ENCODE measurements at regions of chr12 and their contacts with region 1.

Region 1: DNA sequence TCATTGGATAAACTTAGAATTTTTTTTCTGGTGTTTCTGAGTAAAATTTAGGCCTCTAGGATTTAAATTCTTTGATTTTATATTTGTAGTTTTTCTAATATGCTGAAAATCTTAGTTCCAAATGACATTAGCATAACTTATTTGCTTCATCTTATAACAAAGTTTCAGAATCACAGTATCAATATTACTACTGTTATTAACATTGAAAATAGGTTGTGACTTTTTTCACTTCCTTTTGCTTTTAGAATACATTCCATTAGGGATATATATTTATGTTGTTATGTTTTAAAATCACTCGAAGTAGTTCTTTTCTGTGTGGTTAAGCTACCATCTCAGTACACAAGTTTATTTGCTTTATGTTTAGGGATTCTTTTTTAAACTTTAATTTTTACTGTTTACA is 12.8 kb downstream of the RAB3IP start:
- DNase-seq: no peak
- H3K4me3 Mint-ChIP-seq: no peak overlapping the region
- H3K27ac Mint-ChIP-seq: no peak overlapping the region
- H3K4me1 Mint-ChIP-seq: peaks cover 3% of the 10 kb centered on the region
- H3K27me3 Mint-ChIP-seq: no peaks in the 10 kb centered on the region

Region 2: DNA sequence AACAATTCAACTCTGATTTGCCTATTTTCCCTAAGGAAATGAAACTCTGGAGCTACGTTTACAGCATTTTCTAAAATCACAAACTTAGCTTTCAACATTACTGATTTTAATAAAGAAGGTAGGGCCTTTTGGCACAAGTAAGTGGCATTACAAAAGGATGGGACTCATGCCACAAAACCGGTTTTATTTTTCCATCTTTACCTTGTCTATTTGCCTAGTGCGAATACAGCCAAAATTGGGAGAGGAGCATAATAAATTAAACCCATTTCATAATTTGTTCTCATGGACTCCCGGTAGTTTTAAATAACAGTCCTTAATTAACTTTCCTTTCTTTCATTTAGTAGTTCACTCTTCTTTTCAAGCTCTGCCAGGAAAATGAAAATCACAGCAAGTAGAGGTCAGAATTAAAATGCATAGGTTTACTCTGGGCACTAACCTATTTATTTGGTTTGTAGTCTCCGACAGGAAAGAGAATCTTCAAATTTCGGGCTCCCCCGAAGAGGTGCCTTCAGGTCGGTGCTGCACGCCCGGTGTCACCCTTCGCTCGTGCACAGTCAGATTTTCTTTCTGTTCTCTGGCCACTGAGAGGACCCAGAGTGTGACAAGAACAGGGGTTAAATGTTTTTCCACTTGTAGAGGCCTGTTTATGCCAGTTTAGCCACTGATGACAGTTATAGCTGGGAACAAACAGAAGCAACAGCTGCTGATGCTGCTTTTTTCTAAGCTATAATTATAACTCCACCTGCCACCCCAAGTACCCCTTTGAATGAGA is 52.5 kb before region 1 on chr12 and contains the start of gene BEST3:
- CTCF ChIA-PET with region 1: no interaction called
- POLR2A ChIA-PET with region 1: no interaction called
- DNase-seq: no peak
- H3K4me3 Mint-ChIP-seq: no peak within 1 kb of the TSS
- H3K27ac Mint-ChIP-seq: no peak within 1 kb of the TSS
- H3K4me1 Mint-ChIP-seq: no peaks in the 10 kb centered on the region
- H3K27me3 Mint-ChIP-seq: peaks cover 4% of the 10 kb centered on the region
- total RNA-seq, gene BEST3: not detected

Region 3: GRCh38 chr12:69738351-69739286 is 12.9 kb before region 1 on chr12 and contains the start of gene RAB3IP:
- CTCF ChIA-PET with region 1: interaction called, 10 read pairs
- POLR2A ChIA-PET with region 1: no interaction called
- DNase-seq: peak; percentile 91
- H3K4me3 Mint-ChIP-seq: peak within 1 kb of the TSS; percentile 84
- H3K27ac Mint-ChIP-seq: peak within 1 kb of the TSS; percentile 89
- H3K4me1 Mint-ChIP-seq: peaks cover 21% of the 10 kb centered on the region
- H3K27me3 Mint-ChIP-seq: peaks cover 31% of the 10 kb centered on the region
- total RNA-seq, gene RAB3IP: 19.3 to 24.0 TPM

Region 4: DNA sequence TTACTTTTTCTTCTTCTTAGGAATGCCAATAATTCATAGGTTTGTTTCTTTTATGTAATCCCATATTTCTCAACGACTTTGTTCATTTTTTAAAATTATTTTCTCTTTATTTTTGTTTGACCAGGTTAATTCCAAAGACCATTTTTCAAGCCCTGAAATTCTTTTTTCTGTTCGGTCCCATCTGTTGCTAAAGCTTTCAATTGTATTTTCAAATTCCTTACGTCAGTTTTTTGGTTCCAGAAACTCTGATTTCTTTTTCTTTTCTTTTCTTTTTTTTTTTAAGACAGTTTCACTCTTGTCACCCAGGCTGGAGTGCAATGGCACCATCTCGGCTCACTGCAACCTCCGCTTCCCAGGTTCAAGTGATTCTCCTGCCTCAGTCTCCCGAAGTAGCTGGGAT is 14.8 kb after region 1 on chr12:
- CTCF ChIA-PET with region 1: no interaction called
- POLR2A ChIA-PET with region 1: no interaction called
- DNase-seq: no peak
- H3K4me3 Mint-ChIP-seq: no peak overlapping the region
- H3K27ac Mint-ChIP-seq: no peak overlapping the region
- H3K4me1 Mint-ChIP-seq: no peaks in the 10 kb centered on the region
- H3K27me3 Mint-ChIP-seq: no peaks in the 10 kb centered on the region